Posterior vena cava (tissue), 2 donors: ENCODE measurements at regions of chrX and their contacts with region 1.

Region 1: DNA sequence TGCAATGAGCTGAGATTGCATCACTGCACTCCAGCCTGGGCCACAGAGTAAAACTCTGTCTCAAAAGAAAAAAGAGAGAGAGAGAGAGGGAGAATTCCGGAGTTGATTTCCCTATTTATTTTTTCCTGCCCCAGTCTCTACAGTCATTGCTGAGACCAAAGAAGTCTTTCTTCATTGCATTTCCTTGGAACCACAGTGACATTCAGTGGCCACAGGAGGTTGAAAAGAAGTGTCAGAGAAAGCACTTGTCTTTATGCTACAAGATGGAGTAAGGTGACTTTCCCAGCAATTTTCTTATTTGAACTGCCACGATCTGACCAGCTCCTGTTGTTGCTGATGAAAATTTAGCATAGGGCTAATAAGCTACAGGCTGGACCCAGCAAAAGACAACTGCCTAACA is 187.8 kb downstream of the THOC2 start:
- DNase-seq: no peak

Region 2: GRCh38 chrX:121746105-121746504 is 1798.9 kb before region 1 on chrX:
- intact Hi-C with region 1: loop called in 1 of 2 experiments (anchors 5 kb)
- DNase-seq: no peak

Region 3: DNA sequence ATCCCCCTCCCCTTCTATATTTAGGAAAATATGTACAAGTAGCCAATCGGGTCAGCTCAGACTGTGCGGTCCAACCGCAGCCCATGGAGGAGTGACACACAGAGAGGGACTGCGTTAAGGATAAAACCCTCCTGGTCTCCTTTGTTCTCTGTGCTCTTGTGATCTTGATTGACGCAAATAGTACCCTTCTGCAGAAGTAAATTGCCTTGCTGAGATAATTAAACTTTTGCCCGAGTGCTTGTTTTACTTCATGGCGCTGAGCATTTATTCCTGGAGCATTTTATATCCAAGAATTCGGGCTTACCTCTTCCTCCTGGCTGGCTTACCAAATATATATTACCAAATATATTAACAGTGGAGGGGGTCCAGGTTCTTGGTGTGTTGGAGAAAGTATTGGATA is 600.7 kb after region 1 on chrX:
- intact Hi-C with region 1: loop called in 1 of 2 experiments (anchors 5 kb)
- DNase-seq: no peak